Activated T-helper 2 cell treated with anti-CD3 and anti-CD28 coated beads, Interferon-gamma antibody, Interleukin-2, Interleukin-4, amounts not matched to agents 10 μg/mL and 5 μg/mL and 100 μg/mL, durations not matched to agents 14 hours and 24 hours and 36 hours (primary cell): ENCODE measurements at regions of chr2 and their contacts with region 1.

Region 1: DNA sequence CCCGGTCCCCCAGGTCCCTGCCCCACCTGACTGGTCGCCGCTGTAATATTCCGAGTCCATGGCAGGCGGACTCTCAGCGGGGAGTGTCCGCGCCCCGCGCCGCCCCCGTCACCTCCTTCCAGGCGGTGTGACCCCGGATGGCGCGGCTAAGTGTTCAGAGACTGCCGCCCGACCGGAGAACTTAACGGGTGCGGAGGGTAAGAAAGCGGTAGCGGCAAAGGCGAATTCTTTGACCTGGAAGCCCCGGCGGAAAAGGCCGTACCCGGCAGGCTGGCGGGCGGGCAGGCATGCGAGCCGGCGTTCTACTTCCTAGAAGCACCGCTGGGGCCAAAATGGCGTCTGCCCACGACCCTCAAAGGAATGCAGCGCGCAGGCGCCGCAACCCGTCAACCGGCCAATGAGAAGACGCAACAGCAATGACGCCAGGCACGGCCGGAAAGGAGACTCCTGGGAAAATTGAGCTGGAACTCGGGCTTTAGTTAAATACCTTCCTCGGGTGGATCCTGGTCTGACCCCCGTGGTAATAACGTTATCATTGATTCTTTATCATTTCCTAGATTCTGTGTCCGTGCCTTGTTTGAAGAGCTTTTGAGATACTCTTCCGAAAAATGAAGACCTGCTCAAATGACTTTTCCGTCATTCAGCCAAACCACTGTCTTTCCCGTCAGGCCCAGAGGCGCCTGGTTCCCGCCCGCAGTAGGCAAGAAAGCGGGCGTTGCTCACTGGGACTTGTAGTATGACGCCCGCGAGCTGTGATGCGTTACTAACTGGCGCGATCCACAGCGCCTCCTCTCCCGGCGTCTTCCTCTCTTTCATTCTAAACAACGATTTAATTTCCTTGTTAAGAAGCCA is at the start of gene IWS1:
- DNase-seq: peak; percentile 92
- H3K4me3 Mint-ChIP-seq: peak within 1 kb of the TSS; percentile 93
- H3K27ac Mint-ChIP-seq: peak within 1 kb of the TSS; percentile 89
- H3K4me1 Mint-ChIP-seq: peaks cover 22% of the 10 kb centered on the region
- H3K27me3 Mint-ChIP-seq: peaks cover 2% of the 10 kb centered on the region
- total RNA-seq, gene IWS1: 54.7 and 58.1 TPM in 2 replicates

Region 2: DNA sequence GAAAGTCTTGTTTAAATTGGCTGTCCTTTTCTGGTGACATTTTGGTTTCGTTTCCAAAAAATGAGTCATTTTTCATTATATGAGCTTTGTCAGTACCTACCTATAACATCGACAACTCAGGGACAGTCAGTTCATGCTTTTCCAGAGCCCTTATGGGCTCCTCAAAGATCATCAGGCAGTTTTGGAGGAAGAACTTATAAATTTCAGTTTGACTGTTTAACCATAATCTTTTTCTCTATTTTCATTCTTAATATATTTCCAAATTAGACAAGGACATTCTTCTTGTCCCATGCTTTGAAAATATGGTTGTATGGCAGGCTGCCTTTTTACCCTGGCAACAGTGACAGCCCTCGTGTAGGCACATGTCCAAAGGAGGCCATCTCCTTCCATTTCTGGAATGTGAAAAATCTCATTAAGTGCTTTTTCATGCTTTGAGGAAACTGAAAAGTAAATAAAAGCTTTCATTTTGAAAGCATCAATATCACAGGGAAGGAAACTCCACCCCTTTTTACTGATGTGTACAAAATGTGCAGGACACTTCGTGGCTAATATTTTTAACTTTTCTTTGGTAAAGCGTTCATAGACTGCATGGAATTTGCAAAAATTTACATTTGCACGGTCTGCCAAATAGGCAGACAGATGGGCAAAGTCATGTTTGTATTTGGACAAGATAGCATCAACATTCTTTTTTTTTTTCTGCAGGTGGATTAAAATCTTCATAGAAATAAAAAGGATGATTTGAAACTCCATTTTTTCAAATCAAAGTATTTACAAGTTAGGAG is 115.3 kb before region 1 on chr2:
- intact Hi-C with region 1: loop called (anchors 5 kb)
- DNase-seq: no peak
- H3K4me3 Mint-ChIP-seq: peak overlapping the region; percentile 71
- H3K27ac Mint-ChIP-seq: peak overlapping the region; percentile 98
- H3K4me1 Mint-ChIP-seq: peaks cover 45% of the 10 kb centered on the region
- H3K27me3 Mint-ChIP-seq: no peaks in the 10 kb centered on the region

Region 3: GRCh38 chr2:127498386-127498785 is 28.0 kb before region 1 on chr2:
- intact Hi-C with region 1: no loop called
- DNase-seq: no peak
- H3K4me3 Mint-ChIP-seq: no peak overlapping the region
- H3K27ac Mint-ChIP-seq: no peak overlapping the region
- H3K4me1 Mint-ChIP-seq: peaks cover 13% of the 10 kb centered on the region
- H3K27me3 Mint-ChIP-seq: no peaks in the 10 kb centered on the region

Region 4: DNA sequence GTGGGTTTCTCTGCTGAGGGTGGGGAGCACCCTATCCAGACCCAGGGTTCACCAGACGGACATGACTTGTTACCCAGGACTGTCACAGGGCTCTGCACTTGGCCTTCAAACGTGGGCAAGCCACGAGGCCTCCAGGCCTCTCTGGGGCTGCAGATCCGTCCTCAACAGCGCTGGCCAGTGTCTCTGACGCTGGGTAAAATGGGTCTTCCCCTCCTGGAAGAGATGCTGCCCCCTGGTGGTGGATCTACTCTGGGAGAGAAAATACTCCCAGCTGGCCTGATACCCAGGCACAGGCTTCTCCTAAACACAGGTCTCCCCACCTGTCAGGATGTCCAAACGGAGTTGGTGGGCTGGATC is 123.3 kb after region 1 on chr2:
- intact Hi-C with region 1: loop called (anchors 5 kb)
- DNase-seq: peak; percentile 67
- H3K4me3 Mint-ChIP-seq: no peak overlapping the region
- H3K27ac Mint-ChIP-seq: no peak overlapping the region
- H3K4me1 Mint-ChIP-seq: peaks cover 6% of the 10 kb centered on the region
- H3K27me3 Mint-ChIP-seq: no peaks in the 10 kb centered on the region

Region 5: GRCh38 chr2:127857265-127857808 is 331.0 kb after region 1 on chr2:
- intact Hi-C with region 1: loop called (anchors 10 kb)
- DNase-seq: peak; percentile 13
- H3K4me3 Mint-ChIP-seq: peak overlapping the region; percentile 100
- H3K27ac Mint-ChIP-seq: peak overlapping the region; percentile 91
- H3K4me1 Mint-ChIP-seq: peaks cover 26% of the 10 kb centered on the region
- H3K27me3 Mint-ChIP-seq: no peaks in the 10 kb centered on the region

Region 6: DNA sequence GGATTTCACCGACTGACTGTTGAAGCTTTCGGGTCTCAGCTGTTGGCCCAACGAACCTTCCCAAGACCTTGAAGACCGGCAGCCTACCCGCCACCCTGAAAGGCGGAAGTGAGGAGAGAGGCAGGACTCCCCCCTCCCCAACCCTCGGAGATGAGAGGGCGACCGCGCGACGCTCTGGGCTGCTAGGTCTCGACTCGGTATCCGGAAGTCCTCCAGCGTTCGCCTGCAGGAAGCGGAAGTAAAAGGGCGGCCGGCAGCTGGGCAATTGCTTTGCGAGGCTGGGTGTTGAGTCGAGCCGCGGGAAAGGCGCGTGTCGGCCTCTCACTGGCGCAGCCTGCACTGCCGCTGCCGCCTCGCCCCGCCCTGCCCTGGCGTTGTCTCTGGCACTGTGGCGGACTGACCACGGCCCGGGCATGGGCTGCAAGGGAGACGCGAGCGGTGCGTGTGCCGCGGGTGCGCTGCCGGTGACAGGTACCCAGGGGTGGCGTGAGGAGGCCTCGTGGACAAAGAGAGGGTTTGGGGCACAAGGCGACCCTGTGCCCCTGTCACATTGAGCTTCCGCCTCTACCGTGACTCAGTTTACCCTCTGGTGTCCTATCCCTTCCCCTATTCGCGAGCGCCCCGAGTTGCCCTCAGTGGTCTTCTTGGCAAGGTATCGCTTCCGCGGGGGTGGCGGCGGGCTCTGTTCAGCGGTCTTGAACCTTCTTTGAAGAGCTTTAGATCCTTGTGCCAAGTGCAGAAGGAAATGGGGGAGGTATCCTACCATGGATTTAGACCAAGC is 564.8 kb after region 1 on chr2 and contains the start of gene UGGT1:
- intact Hi-C with region 1: loop called (anchors 1 kb)
- DNase-seq: peak; percentile 93
- H3K4me3 Mint-ChIP-seq: peak within 1 kb of the TSS; percentile 94
- H3K27ac Mint-ChIP-seq: peak within 1 kb of the TSS; percentile 92
- H3K4me1 Mint-ChIP-seq: peaks cover 39% of the 10 kb centered on the region
- H3K27me3 Mint-ChIP-seq: no peaks in the 10 kb centered on the region
- total RNA-seq, gene UGGT1: 72.4 and 74.7 TPM in 2 replicates